GM12878 (cell line): ENCODE measurements at regions of chr16 and their contacts with region 1.

Region 1: DNA sequence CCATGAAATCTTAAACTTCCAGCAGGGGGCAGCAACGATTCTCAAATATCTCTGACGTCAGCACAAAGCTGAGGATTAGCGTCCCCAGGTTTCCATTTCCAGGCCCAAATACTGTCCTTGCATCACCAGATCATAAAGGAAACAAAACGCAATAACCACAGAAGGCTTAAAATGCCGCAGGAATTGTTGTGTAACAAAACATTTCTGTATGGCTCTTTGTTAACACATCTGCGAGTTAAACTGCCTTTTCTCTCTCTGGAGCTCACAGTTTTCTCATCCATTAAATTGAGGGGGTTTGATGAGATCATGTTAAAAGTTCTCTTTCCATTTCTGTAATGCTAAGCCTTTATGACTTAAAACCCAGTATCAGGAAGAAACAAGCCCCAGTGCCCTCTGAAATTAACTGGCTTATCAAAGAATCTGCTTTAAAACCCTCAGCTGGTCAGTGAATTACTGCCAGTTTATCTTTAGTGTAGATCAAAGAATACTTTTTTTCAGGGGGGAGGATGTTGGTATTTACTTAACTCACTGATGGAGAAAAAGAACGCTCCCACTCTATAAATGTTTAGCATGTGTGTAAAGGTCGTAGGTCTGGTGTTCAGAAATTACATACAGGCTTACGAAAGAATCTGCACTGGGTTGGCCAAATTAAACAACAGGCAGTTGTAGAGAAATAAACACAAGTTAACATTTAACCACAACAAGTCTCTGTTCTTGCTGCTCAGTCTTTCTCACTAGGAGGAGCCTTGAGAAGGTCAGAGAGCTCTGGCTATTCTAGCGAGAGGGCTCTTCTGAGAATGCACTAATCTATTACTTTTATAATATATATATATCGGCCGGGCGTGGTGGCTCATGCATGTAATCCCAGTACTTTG is 10.6 kb upstream of the TERF2 start:
- DNase-seq: peak; percentile 45
- ATAC-seq: peak; percentile 79
- H3K4me3 ChIP-seq: no peak overlapping the region
- H3K27ac ChIP-seq: no peak overlapping the region
- H3K4me1 ChIP-seq: no peaks in the 10 kb centered on the region
- H3K27me3 ChIP-seq: no peaks in the 10 kb centered on the region
- CTCF ChIP-seq: peak; percentile 42 to 62 (median 51); a peak in 4 of 6 replicates
- EP300 ChIP-seq: no peak
- POLR2A ChIP-seq: no peak
- RAD21 ChIP-seq: peak; percentile 73

Region 2: DNA sequence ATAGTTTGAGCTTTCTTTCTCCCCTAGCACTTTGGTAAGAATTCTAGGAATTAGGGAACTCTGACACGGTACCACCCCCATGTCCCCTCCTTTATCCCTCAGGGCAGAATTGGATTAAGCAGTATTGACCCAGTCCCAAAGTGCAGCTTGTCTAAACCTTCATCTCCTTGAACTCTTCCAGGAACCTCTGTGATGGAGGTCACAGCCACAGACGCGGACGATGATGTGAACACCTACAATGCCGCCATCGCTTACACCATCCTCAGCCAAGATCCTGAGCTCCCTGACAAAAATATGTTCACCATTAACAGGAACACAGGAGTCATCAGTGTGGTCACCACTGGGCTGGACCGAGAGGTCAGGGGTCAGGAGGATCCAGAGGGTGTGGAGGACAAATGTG is 584.9 kb before region 1 on chr16:
- CTCF ChIA-PET with region 1: no interaction called
- POLR2A ChIA-PET with region 1: no interaction called
- RAD21 ChIA-PET with region 1: no interaction called
- SMC1A ChIA-PET with region 1: no interaction called
- in situ Hi-C with region 1: no loop called
- intact Hi-C with region 1: no loop called
- DNase-seq: no peak
- ATAC-seq: no peak
- H3K4me3 ChIP-seq: no peak overlapping the region
- H3K27ac ChIP-seq: no peak overlapping the region
- H3K4me1 ChIP-seq: no peaks in the 10 kb centered on the region
- H3K27me3 ChIP-seq: no peaks in the 10 kb centered on the region
- CTCF ChIP-seq: no peak
- EP300 ChIP-seq: no peak
- POLR2A ChIP-seq: no peak
- RAD21 ChIP-seq: no peak

Region 3: DNA sequence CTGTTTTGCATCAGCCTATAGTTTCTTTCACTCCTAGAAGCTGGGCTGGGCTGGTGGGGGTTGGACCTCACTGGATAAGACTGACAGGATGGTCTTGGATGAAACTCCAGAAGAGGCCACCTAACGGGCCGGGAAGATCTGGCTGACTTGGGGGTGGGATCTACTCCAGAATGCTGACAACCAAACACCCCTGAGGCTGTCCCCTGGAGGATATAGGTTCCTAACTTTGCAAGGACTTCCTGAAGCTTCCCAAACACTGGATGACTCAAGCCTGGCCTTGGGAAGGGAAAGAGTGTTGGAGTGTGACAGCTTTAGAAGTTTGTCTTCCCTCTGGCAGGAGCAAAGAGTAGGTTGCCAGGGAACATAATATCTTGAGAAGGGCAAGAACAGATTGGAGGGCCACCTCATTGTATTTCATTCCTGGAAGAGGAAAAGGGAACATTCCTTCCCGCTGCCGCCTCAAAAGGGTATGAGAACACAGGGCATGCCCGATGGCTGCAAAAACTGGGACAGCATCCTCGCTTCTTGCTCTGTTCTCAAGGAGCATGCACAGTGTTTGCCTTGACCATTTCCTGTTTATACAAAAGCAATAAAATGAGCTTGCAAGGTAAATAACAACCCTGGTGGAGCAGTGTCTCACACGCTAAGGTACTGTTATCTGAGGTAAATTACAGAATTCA is 21.2 kb after region 1 on chr16:
- CTCF ChIA-PET with region 1: interaction called, 27 read pairs
- POLR2A ChIA-PET with region 1: interaction called, 3 read pairs
- RAD21 ChIA-PET with region 1: interaction called, 3 read pairs
- SMC1A ChIA-PET with region 1: interaction called, 4 read pairs
- in situ Hi-C with region 1: no loop called
- intact Hi-C with region 1: no loop called
- DNase-seq: no peak
- ATAC-seq: no peak
- H3K4me3 ChIP-seq: no peak overlapping the region
- H3K27ac ChIP-seq: no peak overlapping the region
- H3K4me1 ChIP-seq: no peaks in the 10 kb centered on the region
- H3K27me3 ChIP-seq: no peaks in the 10 kb centered on the region
- CTCF ChIP-seq: no peak
- EP300 ChIP-seq: no peak
- POLR2A ChIP-seq: no peak
- RAD21 ChIP-seq: no peak

Region 4: GRCh38 chr16:69443927-69444631 is 47.7 kb after region 1 on chr16:
- CTCF ChIA-PET with region 1: interaction called, 11 read pairs
- POLR2A ChIA-PET with region 1: no interaction called
- RAD21 ChIA-PET with region 1: interaction called, 12 read pairs
- SMC1A ChIA-PET with region 1: interaction called, 4 read pairs
- in situ Hi-C with region 1: no loop called
- intact Hi-C with region 1: no loop called
- DNase-seq: no peak
- ATAC-seq: peak; percentile 84
- H3K4me3 ChIP-seq: peak overlapping the region; percentile 40
- H3K27ac ChIP-seq: peak overlapping the region; percentile 85
- H3K4me1 ChIP-seq: peaks cover 20% of the 10 kb centered on the region
- H3K27me3 ChIP-seq: no peaks in the 10 kb centered on the region
- CTCF ChIP-seq: no peak
- EP300 ChIP-seq: no peak
- POLR2A ChIP-seq: no peak
- RAD21 ChIP-seq: no peak

Region 5: GRCh38 chr16:69565671-69566239 is 169.3 kb after region 1 on chr16 and contains the start of gene NFAT5:
- CTCF ChIA-PET with region 1: interaction called, 39 read pairs
- POLR2A ChIA-PET with region 1: interaction called, 10 read pairs
- RAD21 ChIA-PET with region 1: interaction called, 50 read pairs
- SMC1A ChIA-PET with region 1: interaction called, 40 read pairs
- in situ Hi-C with region 1: no loop called
- intact Hi-C with region 1: loop called (anchors 1 kb)
- DNase-seq: no peak
- ATAC-seq: peak; percentile 40
- H3K4me3 ChIP-seq: peak within 1 kb of the TSS; percentile 97
- H3K27ac ChIP-seq: peak within 1 kb of the TSS; percentile 96
- H3K4me1 ChIP-seq: no peaks in the 10 kb centered on the region; the same call in 1 of the 2 replicates
- H3K27me3 ChIP-seq: no peaks in the 10 kb centered on the region
- CTCF ChIP-seq: no peak
- EP300 ChIP-seq: peak in 1 of 2 experiments; percentile 100; a peak in 2 of 4 replicates
- POLR2A ChIP-seq: peak; percentile 87
- RAD21 ChIP-seq: no peak
- polyA plus RNA-seq, gene NFAT5: 0.58 to 1.9 TPM

Region 6: GRCh38 chr16:69691980-69692911 is 295.8 kb after region 1 on chr16:
- CTCF ChIA-PET with region 1: interaction called, 15 read pairs
- POLR2A ChIA-PET with region 1: no interaction called
- RAD21 ChIA-PET with region 1: interaction called, 7 read pairs
- SMC1A ChIA-PET with region 1: interaction called, 5 read pairs
- in situ Hi-C with region 1: no loop called
- intact Hi-C with region 1: no loop called
- DNase-seq: peak; percentile 7
- ATAC-seq: no peak; the same call in 1 of the 3 replicates
- H3K4me3 ChIP-seq: no peak overlapping the region
- H3K27ac ChIP-seq: no peak overlapping the region
- H3K4me1 ChIP-seq: peaks cover 5% of the 10 kb centered on the region; the same call in 1 of the 2 replicates
- H3K27me3 ChIP-seq: no peaks in the 10 kb centered on the region
- CTCF ChIP-seq: no peak
- EP300 ChIP-seq: no peak
- POLR2A ChIP-seq: no peak
- RAD21 ChIP-seq: no peak

Region 7: GRCh38 chr16:69709456-69710084 is 313.1 kb after region 1 on chr16:
- CTCF ChIA-PET with region 1: interaction called, 38 read pairs
- POLR2A ChIA-PET with region 1: no interaction called
- RAD21 ChIA-PET with region 1: interaction called, 12 read pairs
- SMC1A ChIA-PET with region 1: interaction called, 7 read pairs
- in situ Hi-C with region 1: no loop called
- intact Hi-C with region 1: loop called (anchors 5 kb)
- DNase-seq: peak; percentile 15
- ATAC-seq: peak; percentile 83
- H3K4me3 ChIP-seq: no peak overlapping the region
- H3K27ac ChIP-seq: no peak overlapping the region
- H3K4me1 ChIP-seq: no peaks in the 10 kb centered on the region
- H3K27me3 ChIP-seq: no peaks in the 10 kb centered on the region
- CTCF ChIP-seq: peak; percentile 43 to 74 (median 64); a peak in 5 of 6 replicates
- EP300 ChIP-seq: no peak
- POLR2A ChIP-seq: no peak
- RAD21 ChIP-seq: peak; percentile 73

Region 8: GRCh38 chr16:69823831-69824563 is 427.6 kb after region 1 on chr16:
- CTCF ChIA-PET with region 1: no interaction called
- POLR2A ChIA-PET with region 1: no interaction called
- RAD21 ChIA-PET with region 1: no interaction called
- SMC1A ChIA-PET with region 1: no interaction called
- in situ Hi-C with region 1: no loop called
- intact Hi-C with region 1: no loop called
- DNase-seq: peak; percentile 51
- ATAC-seq: peak; percentile 55
- H3K4me3 ChIP-seq: peak overlapping the region; percentile 39; the same call in 1 of the 2 replicates
- H3K27ac ChIP-seq: peak overlapping the region; percentile 85
- H3K4me1 ChIP-seq: peaks cover 12% of the 10 kb centered on the region
- H3K27me3 ChIP-seq: no peaks in the 10 kb centered on the region
- CTCF ChIP-seq: no peak
- EP300 ChIP-seq: no peak
- POLR2A ChIP-seq: peak; percentile 79
- RAD21 ChIP-seq: no peak

Region 9: GRCh38 chr16:69930117-69930776 is 533.8 kb after region 1 on chr16:
- CTCF ChIA-PET with region 1: interaction called, 18 read pairs
- POLR2A ChIA-PET with region 1: no interaction called
- RAD21 ChIA-PET with region 1: interaction called, 11 read pairs
- SMC1A ChIA-PET with region 1: no interaction called
- in situ Hi-C with region 1: no loop called
- intact Hi-C with region 1: no loop called
- DNase-seq: no peak
- ATAC-seq: peak; percentile 98
- H3K4me3 ChIP-seq: no peak overlapping the region
- H3K27ac ChIP-seq: no peak overlapping the region
- H3K4me1 ChIP-seq: no peaks in the 10 kb centered on the region
- H3K27me3 ChIP-seq: no peaks in the 10 kb centered on the region
- CTCF ChIP-seq: peak; percentile 60 to 71 (median 68)
- EP300 ChIP-seq: no peak
- POLR2A ChIP-seq: no peak
- RAD21 ChIP-seq: peak; percentile 72